ENCODE measurements at regions of chr15 and their contacts with region 1.

Region 1: DNA sequence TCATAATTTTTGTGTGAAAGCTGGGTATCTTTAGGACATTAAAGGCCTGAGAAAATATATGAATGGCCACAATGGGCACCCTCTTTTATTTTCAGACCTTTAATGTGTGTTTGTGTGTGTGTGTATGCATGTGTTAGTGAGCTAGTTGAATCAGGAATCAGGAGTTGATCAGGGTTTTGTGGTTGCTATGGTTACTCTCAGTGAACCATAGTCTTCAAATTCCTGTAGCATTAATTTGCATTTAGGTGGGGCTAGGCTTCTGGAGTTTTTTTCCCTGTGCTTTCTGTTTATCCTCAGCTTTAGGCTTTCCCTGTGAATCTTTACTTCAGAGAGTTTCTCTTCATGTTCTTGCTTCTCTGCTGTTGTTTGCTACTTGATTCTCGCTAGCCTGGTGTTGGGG is 122.0 kb upstream of the ONECUT1 start:
- DNase-seq: no peak

Region 2: GRCh38 chr15:52642386-52643361 is 269.5 kb before region 1 on chr15:
- intact Hi-C with region 1: no loop called
- DNase-seq: no peak

Region 3: DNA sequence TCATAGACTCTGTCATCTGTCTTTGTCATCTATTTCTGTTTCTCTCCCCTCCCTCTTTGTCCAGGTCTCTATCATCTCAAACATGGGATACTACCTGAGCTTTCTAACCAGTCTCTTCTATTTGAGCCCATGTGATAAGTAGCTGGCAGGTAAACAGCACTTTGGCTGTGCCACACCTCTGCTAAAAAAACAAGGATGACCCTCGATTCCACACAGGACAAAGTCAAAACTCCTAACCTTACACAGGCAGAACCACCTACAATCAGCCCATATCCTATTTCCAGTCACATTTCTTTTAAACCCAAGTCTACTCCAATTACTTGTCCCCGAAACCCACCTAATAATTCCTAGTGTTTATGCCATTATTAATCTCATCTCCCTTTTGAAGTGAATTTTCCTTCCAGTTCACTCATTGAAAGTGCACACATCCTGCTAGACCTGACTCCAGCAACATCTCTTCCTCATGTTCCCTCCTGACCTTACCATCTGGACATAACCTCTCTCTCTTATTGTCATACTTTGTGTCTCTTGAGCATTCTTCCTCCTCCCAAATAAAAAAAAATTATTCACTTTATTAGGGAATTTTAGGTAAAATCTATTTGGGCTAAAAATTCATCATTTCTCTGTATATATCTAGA is 134.1 kb after region 1 on chr15:
- intact Hi-C with region 1: loop called in 1 of 2 experiments (anchors 10 kb)
- DNase-seq: no peak

Measured in posterior vena cava (tissue), 2 donors.